ENCODE measurements at regions of chr2 and their contacts with region 1.

Region 1: DNA sequence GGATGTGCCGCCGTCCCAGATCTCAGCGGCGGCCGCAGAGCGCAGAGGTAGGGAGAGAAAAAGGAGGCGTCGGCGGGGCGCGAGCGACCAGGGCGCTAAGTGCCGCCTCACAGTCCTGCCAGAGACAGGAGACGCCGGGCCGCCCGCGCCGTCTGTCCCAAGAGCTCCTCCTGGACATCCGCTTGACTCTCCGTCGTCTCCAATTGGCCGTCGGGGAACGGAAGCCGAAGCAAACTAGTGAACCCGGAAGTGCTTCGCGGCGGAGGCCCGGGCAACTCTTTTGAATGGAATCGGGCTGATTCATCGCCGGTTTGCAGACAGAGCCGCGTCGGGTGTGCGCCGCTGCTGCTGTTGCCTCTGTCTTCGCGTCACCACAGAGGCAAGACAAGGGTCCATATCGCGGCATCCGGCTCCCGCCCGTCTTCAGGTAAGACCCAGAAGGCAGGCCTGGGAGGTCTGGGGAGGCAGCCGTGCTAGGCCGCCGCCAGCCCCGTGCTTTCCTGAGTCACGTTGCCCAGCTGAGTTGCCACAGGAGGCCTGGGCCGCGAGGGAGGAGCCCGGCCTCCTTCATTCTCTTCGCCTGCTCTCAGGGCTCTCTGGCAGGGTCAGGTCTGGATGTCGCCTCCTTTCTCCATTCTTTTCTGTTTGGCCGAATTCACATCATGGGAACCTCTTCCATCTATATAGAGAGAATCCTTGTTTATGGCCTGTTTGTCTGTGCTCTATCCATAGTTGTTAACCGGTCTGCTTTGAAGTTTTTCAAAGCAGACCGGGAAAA is at the start of gene PSMD14:
- DNase-seq: peak; percentile 96
- ATAC-seq: peak; percentile 91
- H3K4me3 Mint-ChIP-seq: peak within 1 kb of the TSS; percentile 87
- H3K27ac Mint-ChIP-seq: peak within 1 kb of the TSS; percentile 93
- H3K4me1 Mint-ChIP-seq: peaks cover 28% of the 10 kb centered on the region
- H3K27me3 Mint-ChIP-seq: no peaks in the 10 kb centered on the region
- total RNA-seq, gene PSMD14: 69.5 to 85.7 TPM

Region 2: GRCh38 chr2:160606341-160606740 is 702.0 kb before region 1 on chr2:
- CTCF ChIA-PET with region 1: no interaction called
- POLR2A ChIA-PET with region 1: no interaction called
- intact Hi-C with region 1: no loop called
- DNase-seq: no peak
- ATAC-seq: no peak
- H3K4me3 Mint-ChIP-seq: no peak overlapping the region
- H3K27ac Mint-ChIP-seq: no peak overlapping the region
- H3K4me1 Mint-ChIP-seq: peaks cover 34% of the 10 kb centered on the region
- H3K27me3 Mint-ChIP-seq: no peaks in the 10 kb centered on the region

Region 3: DNA sequence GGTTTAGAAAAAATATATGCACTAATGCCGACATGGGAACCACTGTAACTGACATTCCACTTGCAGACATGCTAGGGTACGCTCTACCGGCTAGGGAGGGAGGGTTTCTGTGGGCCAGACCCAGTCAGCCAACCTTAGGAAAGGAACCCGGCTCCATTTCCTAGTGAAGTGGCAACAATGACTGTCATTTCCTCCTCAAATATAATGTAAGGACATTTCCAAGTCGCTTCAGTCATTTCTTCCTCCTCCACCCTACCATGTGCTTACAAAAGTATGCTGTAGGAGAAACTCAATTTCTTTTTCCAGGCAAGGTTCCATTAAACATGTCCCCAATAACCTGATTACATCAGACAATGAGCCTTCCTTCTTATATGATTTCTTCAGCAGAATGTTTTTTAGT is 64.5 kb before region 1 on chr2:
- CTCF ChIA-PET with region 1: interaction called, 4 read pairs
- POLR2A ChIA-PET with region 1: interaction called, 3 read pairs
- intact Hi-C with region 1: loop called (anchors 1 kb)
- DNase-seq: peak; percentile 53
- ATAC-seq: peak; percentile 20
- H3K4me3 Mint-ChIP-seq: peak overlapping the region; percentile 91
- H3K27ac Mint-ChIP-seq: peak overlapping the region; percentile 98
- H3K4me1 Mint-ChIP-seq: peaks cover 56% of the 10 kb centered on the region
- H3K27me3 Mint-ChIP-seq: no peaks in the 10 kb centered on the region

Region 4: GRCh38 chr2:161662373-161662772 is 354.0 kb after region 1 on chr2:
- CTCF ChIA-PET with region 1: no interaction called
- POLR2A ChIA-PET with region 1: no interaction called
- intact Hi-C with region 1: no loop called
- DNase-seq: no peak
- ATAC-seq: no peak
- H3K4me3 Mint-ChIP-seq: no peak overlapping the region
- H3K27ac Mint-ChIP-seq: no peak overlapping the region
- H3K4me1 Mint-ChIP-seq: no peaks in the 10 kb centered on the region
- H3K27me3 Mint-ChIP-seq: peaks cover 4% of the 10 kb centered on the region

Region 5: GRCh38 chr2:162623888-162624287 is 1315.5 kb after region 1 on chr2:
- CTCF ChIA-PET with region 1: no interaction called
- POLR2A ChIA-PET with region 1: no interaction called
- intact Hi-C with region 1: no loop called
- DNase-seq: no peak
- ATAC-seq: no peak
- H3K4me3 Mint-ChIP-seq: no peak overlapping the region
- H3K27ac Mint-ChIP-seq: no peak overlapping the region
- H3K4me1 Mint-ChIP-seq: no peaks in the 10 kb centered on the region
- H3K27me3 Mint-ChIP-seq: no peaks in the 10 kb centered on the region

Measured in activated CD4-positive, alpha-beta T cell treated with anti-CD3 and anti-CD28 coated beads for 36 hours (primary cell).